ENCODE measurements at regions of chr7 and their contacts with region 1.

Region 1: DNA sequence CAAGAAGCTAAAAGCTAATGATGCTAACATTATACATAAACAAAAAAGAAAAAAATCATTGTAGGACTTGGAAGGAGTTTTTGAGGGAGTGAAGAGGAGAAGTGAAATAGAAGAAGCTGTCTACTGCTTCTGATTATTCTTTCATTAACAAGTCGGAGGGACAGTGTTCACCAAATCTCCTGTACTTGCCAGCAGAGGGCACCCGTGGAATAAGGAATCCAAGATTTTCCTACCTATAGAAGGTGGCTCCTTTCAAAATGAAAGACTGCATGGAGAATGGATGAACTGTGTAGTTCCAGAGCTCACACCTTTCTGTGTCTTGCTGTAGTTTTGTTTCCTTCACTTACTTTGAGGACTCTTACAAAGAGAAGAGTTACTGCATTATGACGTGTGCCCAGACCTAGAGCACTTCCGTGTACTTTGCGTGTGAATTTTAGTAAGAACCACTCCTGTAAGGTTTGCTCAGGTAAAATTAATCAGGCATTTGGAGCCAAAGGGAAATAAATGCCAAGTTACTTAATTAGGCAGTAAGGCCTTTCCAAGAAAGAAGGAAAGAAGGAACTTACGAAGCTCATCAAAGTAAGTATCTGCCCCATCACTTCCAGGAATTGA is 145.1 kb downstream of the SEMA3D start:
- DNase-seq: peak; percentile 3
- ATAC-seq: peak; percentile 87
- H3K4me3 ChIP-seq: no peak overlapping the region
- H3K27ac ChIP-seq: no peak overlapping the region
- H3K4me1 ChIP-seq: no peaks in the 10 kb centered on the region
- H3K27me3 ChIP-seq: no peaks in the 10 kb centered on the region
- CTCF ChIP-seq: peak; percentile 60 to 76 (median 61); a peak in 5 of 6 replicates
- EP300 ChIP-seq: no peak
- POLR2A ChIP-seq: no peak
- RAD21 ChIP-seq: peak; percentile 77

Region 2: DNA sequence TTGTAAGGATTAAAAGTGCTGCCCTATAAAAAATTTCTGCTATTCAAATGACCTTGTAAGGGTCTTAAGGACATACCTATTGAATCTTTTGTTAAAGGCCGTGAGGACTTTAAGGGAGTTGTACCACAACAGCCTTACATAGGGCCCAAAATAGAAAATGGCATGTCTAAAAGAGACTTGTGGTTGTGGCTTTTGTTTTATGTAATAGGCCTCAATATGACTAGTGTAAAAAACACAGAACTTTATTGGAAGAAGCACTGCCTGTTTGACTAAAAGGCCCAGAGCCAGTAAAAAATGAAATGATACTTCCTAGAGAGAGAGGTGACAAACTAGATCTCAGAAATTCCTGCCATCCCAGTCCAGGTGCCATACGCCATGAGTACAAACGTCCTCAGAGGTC is 141.5 kb before region 1 on chr7:
- CTCF ChIA-PET with region 1: no interaction called
- POLR2A ChIA-PET with region 1: no interaction called
- RAD21 ChIA-PET with region 1: no interaction called
- SMC1A ChIA-PET with region 1: no interaction called
- in situ Hi-C with region 1: no loop called
- intact Hi-C with region 1: no loop called
- DNase-seq: no peak
- ATAC-seq: peak; percentile 51
- H3K4me3 ChIP-seq: no peak overlapping the region
- H3K27ac ChIP-seq: no peak overlapping the region
- H3K4me1 ChIP-seq: no peaks in the 10 kb centered on the region
- H3K27me3 ChIP-seq: no peaks in the 10 kb centered on the region
- CTCF ChIP-seq: no peak
- EP300 ChIP-seq: no peak
- POLR2A ChIP-seq: no peak
- RAD21 ChIP-seq: no peak

Region 3: DNA sequence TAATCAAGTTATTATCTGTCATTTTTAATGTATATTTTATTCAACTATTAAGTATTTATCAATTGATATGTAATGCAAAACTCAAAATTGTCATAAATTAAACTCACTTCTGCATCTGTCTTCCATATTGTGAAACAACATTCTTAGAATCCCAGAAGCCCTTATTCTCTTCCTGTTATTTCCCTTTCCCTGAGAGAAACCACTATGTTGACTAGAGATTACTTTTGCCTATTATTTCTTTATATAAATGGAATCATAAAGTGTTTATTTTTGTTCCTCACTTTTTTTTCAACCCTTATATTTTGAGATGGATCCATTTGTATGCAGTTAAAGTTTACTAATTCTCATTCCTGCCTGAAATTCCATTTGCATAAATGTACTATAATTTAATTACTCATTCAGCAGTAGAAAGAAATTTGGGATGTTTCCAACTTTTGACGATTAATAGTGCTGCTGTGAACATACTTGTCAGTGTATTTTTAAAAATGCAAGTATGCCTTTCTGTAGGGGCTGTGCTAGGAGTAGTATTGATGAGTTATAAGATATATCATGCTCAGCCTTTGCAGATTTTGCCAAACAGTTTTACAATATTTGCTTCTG is 66.0 kb before region 1 on chr7:
- CTCF ChIA-PET with region 1: no interaction called
- POLR2A ChIA-PET with region 1: no interaction called
- RAD21 ChIA-PET with region 1: no interaction called
- SMC1A ChIA-PET with region 1: no interaction called
- in situ Hi-C with region 1: no loop called
- intact Hi-C with region 1: no loop called
- DNase-seq: no peak
- ATAC-seq: no peak
- H3K4me3 ChIP-seq: no peak overlapping the region
- H3K27ac ChIP-seq: no peak overlapping the region
- H3K4me1 ChIP-seq: no peaks in the 10 kb centered on the region
- H3K27me3 ChIP-seq: no peaks in the 10 kb centered on the region
- CTCF ChIP-seq: no peak
- EP300 ChIP-seq: no peak
- POLR2A ChIP-seq: no peak
- RAD21 ChIP-seq: no peak

Region 4: GRCh38 chr7:85186521-85187241 is 145.0 kb after region 1 on chr7 and contains the start of gene SEMA3D:
- CTCF ChIA-PET with region 1: no interaction called
- POLR2A ChIA-PET with region 1: no interaction called
- RAD21 ChIA-PET with region 1: no interaction called
- SMC1A ChIA-PET with region 1: interaction called, 3 read pairs
- in situ Hi-C with region 1: no loop called
- intact Hi-C with region 1: loop called (anchors 5 kb)
- DNase-seq: no peak
- ATAC-seq: peak; percentile 99
- H3K4me3 ChIP-seq: peak within 1 kb of the TSS; percentile 22; the same call in 1 of the 2 replicates
- H3K27ac ChIP-seq: no peak within 1 kb of the TSS
- H3K4me1 ChIP-seq: no peaks in the 10 kb centered on the region
- H3K27me3 ChIP-seq: peaks cover 12 to 25% of the 10 kb centered on the region in 2 experiments
- CTCF ChIP-seq: peak; percentile 61 to 75 (median 70)
- EP300 ChIP-seq: no peak
- POLR2A ChIP-seq: no peak
- RAD21 ChIP-seq: peak; percentile 57
- polyA plus RNA-seq, gene SEMA3D: 0.04 TPM in 1 of 2 experiments, not detected in the other

Region 5: DNA sequence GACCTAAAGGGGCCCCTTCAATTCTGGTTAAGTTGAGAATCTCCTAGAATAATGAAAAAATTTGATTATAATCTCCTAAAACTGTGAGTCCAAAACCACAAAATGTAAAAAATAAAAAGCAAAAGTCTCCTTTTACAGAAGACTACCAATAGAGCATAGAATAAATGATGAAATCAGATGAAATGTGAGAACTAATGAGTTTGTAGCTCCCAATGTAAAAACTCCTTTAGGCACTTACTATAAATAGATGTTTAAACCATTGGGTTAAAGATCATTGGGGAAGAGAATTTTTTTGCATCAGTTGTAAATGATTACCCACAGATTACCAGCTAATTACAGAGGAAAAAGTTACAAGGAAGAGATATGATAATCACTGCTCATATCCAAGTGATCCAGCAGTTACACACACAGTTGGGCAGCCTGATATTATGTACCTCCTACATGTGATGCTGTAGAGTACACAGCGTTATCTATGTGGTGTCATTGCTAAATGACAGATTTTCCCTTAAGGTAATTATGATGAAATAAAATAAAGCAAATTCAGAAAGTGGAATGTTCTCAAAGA is 427.8 kb after region 1 on chr7:
- CTCF ChIA-PET with region 1: interaction called, 19 read pairs
- POLR2A ChIA-PET with region 1: no interaction called
- RAD21 ChIA-PET with region 1: no interaction called
- SMC1A ChIA-PET with region 1: interaction called, 6 read pairs
- in situ Hi-C with region 1: no loop called
- intact Hi-C with region 1: loop called (anchors 5 kb)
- DNase-seq: no peak
- ATAC-seq: no peak
- H3K4me3 ChIP-seq: no peak overlapping the region
- H3K27ac ChIP-seq: no peak overlapping the region
- H3K4me1 ChIP-seq: no peaks in the 10 kb centered on the region
- H3K27me3 ChIP-seq: no peaks in the 10 kb centered on the region
- CTCF ChIP-seq: no peak
- EP300 ChIP-seq: no peak
- POLR2A ChIP-seq: no peak
- RAD21 ChIP-seq: no peak

Region 6: GRCh38 chr7:85583131-85583953 is 541.6 kb after region 1 on chr7:
- CTCF ChIA-PET with region 1: no interaction called
- POLR2A ChIA-PET with region 1: no interaction called
- RAD21 ChIA-PET with region 1: no interaction called
- SMC1A ChIA-PET with region 1: no interaction called
- in situ Hi-C with region 1: no loop called
- intact Hi-C with region 1: no loop called
- DNase-seq: no peak
- ATAC-seq: no peak
- H3K4me3 ChIP-seq: no peak overlapping the region
- H3K27ac ChIP-seq: no peak overlapping the region
- H3K4me1 ChIP-seq: no peaks in the 10 kb centered on the region
- H3K27me3 ChIP-seq: no peaks in the 10 kb centered on the region
- CTCF ChIP-seq: no peak
- EP300 ChIP-seq: no peak
- POLR2A ChIP-seq: no peak
- RAD21 ChIP-seq: no peak

Region 7: DNA sequence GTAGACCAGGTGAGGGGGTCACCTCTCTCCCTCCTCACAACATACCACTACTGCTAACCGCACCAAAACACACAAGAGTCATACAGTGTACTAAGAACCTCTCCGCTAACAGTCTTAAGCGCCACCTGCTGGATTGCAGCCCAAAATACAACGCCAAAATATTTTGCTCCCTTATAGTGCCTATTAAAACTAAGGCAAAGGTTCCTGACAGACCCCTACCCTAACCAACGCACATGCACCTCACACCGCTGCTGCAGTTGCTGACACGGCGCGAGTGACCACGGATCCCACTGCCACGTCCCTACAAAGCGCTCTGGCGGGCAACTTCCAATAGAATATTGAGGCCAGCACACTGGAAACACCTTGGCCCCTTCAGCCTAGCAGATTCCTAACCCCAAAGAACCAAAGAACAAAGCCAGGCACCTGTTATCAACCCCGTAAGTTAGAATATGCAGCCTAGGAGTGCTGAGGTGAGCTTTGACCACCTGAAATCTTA is 708.8 kb after region 1 on chr7:
- CTCF ChIA-PET with region 1: interaction called, 3 read pairs
- POLR2A ChIA-PET with region 1: no interaction called
- RAD21 ChIA-PET with region 1: no interaction called
- SMC1A ChIA-PET with region 1: no interaction called
- in situ Hi-C with region 1: loop called (anchors 25 kb)
- intact Hi-C with region 1: loop called (anchors 2 kb)
- DNase-seq: no peak
- ATAC-seq: peak; percentile 93
- H3K4me3 ChIP-seq: no peak overlapping the region
- H3K27ac ChIP-seq: no peak overlapping the region
- H3K4me1 ChIP-seq: no peaks in the 10 kb centered on the region
- H3K27me3 ChIP-seq: no peaks in the 10 kb centered on the region
- CTCF ChIP-seq: peak; percentile 65 to 70 (median 66)
- EP300 ChIP-seq: no peak
- POLR2A ChIP-seq: no peak
- RAD21 ChIP-seq: peak; percentile 66